Heart left ventricle (tissue), 16 donors: ENCODE measurements at regions of chr7 and their contacts with region 1.

Region 1: GRCh38 chr7:28020302-28020940 is 160.2 kb downstream of the JAZF1 start:
- DNase-seq: peak; percentile 52 to 75 (median 64)
- ATAC-seq: peak; percentile 49 to 83 (median 76)
- H3K4me3 ChIP-seq: no peak overlapping the region
- H3K27ac ChIP-seq: no peak overlapping the region
- H3K4me1 ChIP-seq: peaks cover 0 to 49% (median 19%) of the 10 kb centered on the region in 12 donors
- H3K27me3 ChIP-seq: no peaks in the 10 kb centered on the region
- CTCF ChIP-seq: peak; percentile 81 to 92 (median 87)
- POLR2A ChIP-seq: no peak

Region 2: DNA sequence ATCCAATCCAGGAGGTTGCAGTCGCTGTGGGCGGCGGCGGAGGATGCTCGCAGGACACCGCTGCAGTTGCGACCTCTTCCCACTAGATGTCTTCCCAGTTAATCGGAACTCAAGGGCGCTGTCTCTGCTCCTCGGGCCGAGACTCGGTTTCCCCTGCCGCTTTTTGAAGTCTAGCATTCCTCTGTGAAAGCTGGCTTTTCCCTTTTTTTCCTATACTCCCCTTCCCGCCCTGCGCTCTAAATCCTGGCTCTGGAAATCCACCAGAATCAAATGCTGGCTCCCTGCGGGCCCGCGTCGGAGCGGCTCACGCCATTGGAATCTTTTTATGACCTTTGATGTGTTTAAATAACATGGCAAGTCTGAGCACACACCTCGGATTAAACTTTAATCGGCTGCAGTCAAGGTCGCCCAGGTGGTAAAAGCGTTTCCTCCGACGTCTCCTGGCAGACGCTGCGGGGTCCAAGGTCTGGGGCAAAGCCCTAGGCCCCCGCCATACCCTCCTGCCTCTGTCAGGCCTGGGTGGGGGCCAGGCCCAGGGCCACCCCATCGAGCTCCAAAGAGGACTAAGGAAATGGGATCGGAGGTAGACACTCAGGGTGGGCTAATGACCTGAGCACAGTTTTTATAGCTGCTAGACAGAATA is 809.9 kb before region 1 on chr7:
- intact Hi-C with region 1: loop called in 1 of 10 experiments (anchors 5 kb)
- DNase-seq: peak in 1 of 5 donors; percentile 56
- ATAC-seq: peak in 3 of 4 donors; percentile 62 to 78 (median 66)
- H3K4me3 ChIP-seq: peak overlapping the region in 8 of 12 donors; percentile 4 to 41 (median 32)
- H3K27ac ChIP-seq: no peak overlapping the region
- H3K4me1 ChIP-seq: peaks cover 0 to 22% (median 8%) of the 10 kb centered on the region in 12 donors
- H3K27me3 ChIP-seq: peaks cover 50 to 98% (median 88%) of the 10 kb centered on the region in 9 donors
- CTCF ChIP-seq: peak; percentile 57 to 80 (median 70)
- POLR2A ChIP-seq: no peak

Region 3: GRCh38 chr7:27662490-27663205 is 357.8 kb before region 1 on chr7 and contains the start of gene HIBADH:
- intact Hi-C with region 1: loop called in 1 of 10 experiments (anchors 10 kb)
- DNase-seq: peak; percentile 99
- ATAC-seq: peak; percentile 99
- H3K4me3 ChIP-seq: peak within 1 kb of the TSS; percentile 57 to 97 (median 80)
- H3K27ac ChIP-seq: peak within 1 kb of the TSS; percentile 85 to 98 (median 91)
- H3K4me1 ChIP-seq: peaks cover 0 to 23% (median 6%) of the 10 kb centered on the region in 12 donors
- H3K27me3 ChIP-seq: no peaks in the 10 kb centered on the region
- CTCF ChIP-seq: peak in 8 of 12 donors; percentile 11 to 48 (median 22)
- POLR2A ChIP-seq: peak in 1 of 2 donors; percentile 96
- total RNA-seq, gene HIBADH: 48.5 to 107 (median 69.7) TPM

Region 4: DNA sequence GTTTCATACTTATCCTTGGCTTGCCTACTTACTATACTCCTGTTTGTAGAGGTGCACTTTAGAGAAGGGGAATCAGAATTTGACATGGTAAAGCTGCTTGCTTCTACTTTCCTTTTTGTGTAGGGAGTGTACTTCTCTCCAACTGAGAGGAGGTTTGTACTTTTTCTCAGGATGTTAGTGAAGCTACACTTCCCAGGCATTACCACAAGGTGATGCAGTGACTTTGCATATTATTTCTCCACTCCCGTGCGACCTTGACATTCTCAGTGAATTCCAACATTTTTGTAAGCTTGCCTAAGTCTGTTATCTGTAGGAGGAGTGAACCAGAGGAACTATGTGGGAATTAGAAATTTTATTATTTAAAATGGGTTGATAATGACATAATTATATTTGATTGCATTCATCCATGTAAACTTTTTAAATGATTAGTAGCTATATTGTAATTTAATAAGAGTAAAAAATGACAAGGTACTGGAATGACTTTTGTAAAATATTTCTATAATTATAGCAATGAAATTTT is 275.3 kb before region 1 on chr7:
- intact Hi-C with region 1: loop called in 3 of 10 experiments (anchors 5 to 10 kb)
- DNase-seq: no peak
- ATAC-seq: peak in 1 of 4 donors; percentile 23
- H3K4me3 ChIP-seq: no peak overlapping the region
- H3K27ac ChIP-seq: peak overlapping the region in 7 of 12 donors; percentile 0 to 47 (median 20)
- H3K4me1 ChIP-seq: peaks cover 0 to 57% (median 48%) of the 10 kb centered on the region in 12 donors
- H3K27me3 ChIP-seq: no peaks in the 10 kb centered on the region
- CTCF ChIP-seq: peak in 11 of 12 donors; percentile 34 to 62 (median 47)
- POLR2A ChIP-seq: no peak

Region 5: GRCh38 chr7:27921081-27921836 is 99.2 kb before region 1 on chr7:
- intact Hi-C with region 1: loop called in 2 of 10 experiments (anchors 5 kb)
- DNase-seq: peak in 2 of 5 donors; percentile 20 to 27
- ATAC-seq: peak in 3 of 4 donors; percentile 47 to 73 (median 59)
- H3K4me3 ChIP-seq: no peak overlapping the region
- H3K27ac ChIP-seq: no peak overlapping the region
- H3K4me1 ChIP-seq: peaks cover 0 to 31% (median 10%) of the 10 kb centered on the region in 12 donors
- H3K27me3 ChIP-seq: no peaks in the 10 kb centered on the region
- CTCF ChIP-seq: peak; percentile 32 to 68 (median 59)
- POLR2A ChIP-seq: no peak

Region 6: GRCh38 chr7:27952456-27953285 is 67.8 kb before region 1 on chr7:
- intact Hi-C with region 1: loop called in 1 of 10 experiments (anchors 10 kb)
- DNase-seq: no peak
- ATAC-seq: peak in 2 of 4 donors; percentile 21 to 38
- H3K4me3 ChIP-seq: no peak overlapping the region
- H3K27ac ChIP-seq: no peak overlapping the region
- H3K4me1 ChIP-seq: peaks cover 0 to 36% (median 5%) of the 10 kb centered on the region in 12 donors
- H3K27me3 ChIP-seq: no peaks in the 10 kb centered on the region
- CTCF ChIP-seq: no peak
- POLR2A ChIP-seq: no peak